Dendritic cell treated with granulocyte-macrophage colony-stimulating factor and Interleukin-4, amounts not matched to agents 40 ng/mL and 50 ng/mL, for 4 days (primary cell): ENCODE measurements at regions of chr17 and their contacts with region 1.

Region 1: GRCh38 chr17:81101614-81102306 is 63.5 kb upstream of the PVALEF start:
- H3K4me3 Mint-ChIP-seq: no peak overlapping the region
- H3K27ac Mint-ChIP-seq: no peak overlapping the region
- H3K4me1 Mint-ChIP-seq: peaks cover 36% of the 10 kb centered on the region
- H3K27me3 Mint-ChIP-seq: peaks cover 3% of the 10 kb centered on the region

Region 2: DNA sequence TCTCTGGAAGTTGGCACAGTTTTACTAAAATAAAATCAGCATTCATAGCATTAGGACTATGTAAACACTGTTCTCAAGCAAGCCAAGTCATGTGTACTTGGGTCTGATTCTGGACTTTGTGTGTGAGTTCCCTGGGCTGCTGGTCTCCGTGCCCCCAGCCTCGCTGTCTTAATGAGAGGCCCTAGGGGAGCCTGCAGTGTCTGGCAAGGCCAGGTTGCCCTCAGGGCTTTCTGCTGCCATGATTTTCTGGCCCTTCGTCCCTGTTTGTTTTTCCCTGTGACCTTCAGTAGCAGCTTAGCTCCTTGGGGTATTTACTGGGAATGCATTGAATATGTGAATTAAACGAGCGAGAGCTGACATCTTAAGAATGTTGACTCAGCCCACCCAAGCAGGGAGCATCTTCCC is 395.3 kb before region 1 on chr17:
- intact Hi-C with region 1: no loop called
- H3K4me3 Mint-ChIP-seq: no peak overlapping the region
- H3K27ac Mint-ChIP-seq: no peak overlapping the region
- H3K4me1 Mint-ChIP-seq: peaks cover 84% of the 10 kb centered on the region
- H3K27me3 Mint-ChIP-seq: no peaks in the 10 kb centered on the region

Region 3: DNA sequence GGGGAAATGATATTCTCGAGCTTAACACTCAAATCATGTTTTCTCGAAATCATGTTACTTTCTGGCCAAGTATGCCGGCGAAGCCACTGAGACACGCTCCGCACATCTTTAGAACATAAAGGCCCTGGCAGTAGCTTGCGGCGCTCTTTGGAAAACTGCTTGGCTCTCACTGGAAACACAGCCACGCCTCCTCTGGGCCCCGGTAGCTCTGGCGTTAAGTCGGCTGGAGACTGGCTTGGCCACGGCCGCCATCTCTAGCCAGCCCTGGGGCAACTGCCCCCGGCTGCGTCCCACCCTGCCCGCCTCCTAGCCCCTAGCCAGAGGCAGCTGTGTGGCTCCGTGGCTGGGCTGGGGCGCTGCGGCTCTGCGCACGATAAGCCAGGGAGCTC is 76.0 kb before region 1 on chr17:
- intact Hi-C with region 1: loop called (anchors 2 kb)
- H3K4me3 Mint-ChIP-seq: no peak overlapping the region
- H3K27ac Mint-ChIP-seq: no peak overlapping the region
- H3K4me1 Mint-ChIP-seq: peaks cover 38% of the 10 kb centered on the region
- H3K27me3 Mint-ChIP-seq: peaks cover 68% of the 10 kb centered on the region

Region 4: GRCh38 chr17:81207610-81208581 is 106.1 kb after region 1 on chr17:
- intact Hi-C with region 1: no loop called
- H3K4me3 Mint-ChIP-seq: no peak overlapping the region
- H3K27ac Mint-ChIP-seq: no peak overlapping the region
- H3K4me1 Mint-ChIP-seq: peaks cover 17% of the 10 kb centered on the region
- H3K27me3 Mint-ChIP-seq: no peaks in the 10 kb centered on the region